Endothelial cell of umbilical vein (primary cell): ENCODE measurements at regions of chr14 and their contacts with region 1.

Region 1: DNA sequence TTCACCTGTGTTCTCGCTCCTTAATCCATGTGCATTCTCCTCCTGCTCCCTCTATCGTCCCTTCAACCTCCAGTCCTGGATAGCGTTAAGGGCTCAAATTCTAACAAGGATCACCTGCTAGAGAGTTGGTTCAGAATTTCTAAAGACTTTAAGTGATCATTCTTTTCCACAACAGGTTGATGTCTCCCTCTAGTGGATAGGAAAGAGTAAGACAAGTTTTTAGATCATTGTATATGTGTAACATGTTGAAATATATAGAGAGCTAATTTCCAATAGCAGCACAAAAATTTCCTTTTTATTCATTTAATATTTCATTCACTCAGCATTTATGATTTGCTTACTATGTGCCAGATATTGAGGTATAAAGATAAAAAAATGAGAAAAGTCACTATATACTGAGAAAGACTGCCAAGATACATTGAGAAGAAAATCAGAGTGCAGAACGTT is 9.3 kb upstream of the ESR2 start:
- DNase-seq: peak; percentile 71
- H3K4me3 ChIP-seq: no peak overlapping the region
- H3K27ac ChIP-seq: no peak overlapping the region
- H3K4me1 ChIP-seq: no peaks in the 10 kb centered on the region
- H3K27me3 ChIP-seq: no peaks in the 10 kb centered on the region
- CTCF ChIP-seq: peak; percentile 48 to 50
- POLR2A ChIP-seq: no peak

Region 2: DNA sequence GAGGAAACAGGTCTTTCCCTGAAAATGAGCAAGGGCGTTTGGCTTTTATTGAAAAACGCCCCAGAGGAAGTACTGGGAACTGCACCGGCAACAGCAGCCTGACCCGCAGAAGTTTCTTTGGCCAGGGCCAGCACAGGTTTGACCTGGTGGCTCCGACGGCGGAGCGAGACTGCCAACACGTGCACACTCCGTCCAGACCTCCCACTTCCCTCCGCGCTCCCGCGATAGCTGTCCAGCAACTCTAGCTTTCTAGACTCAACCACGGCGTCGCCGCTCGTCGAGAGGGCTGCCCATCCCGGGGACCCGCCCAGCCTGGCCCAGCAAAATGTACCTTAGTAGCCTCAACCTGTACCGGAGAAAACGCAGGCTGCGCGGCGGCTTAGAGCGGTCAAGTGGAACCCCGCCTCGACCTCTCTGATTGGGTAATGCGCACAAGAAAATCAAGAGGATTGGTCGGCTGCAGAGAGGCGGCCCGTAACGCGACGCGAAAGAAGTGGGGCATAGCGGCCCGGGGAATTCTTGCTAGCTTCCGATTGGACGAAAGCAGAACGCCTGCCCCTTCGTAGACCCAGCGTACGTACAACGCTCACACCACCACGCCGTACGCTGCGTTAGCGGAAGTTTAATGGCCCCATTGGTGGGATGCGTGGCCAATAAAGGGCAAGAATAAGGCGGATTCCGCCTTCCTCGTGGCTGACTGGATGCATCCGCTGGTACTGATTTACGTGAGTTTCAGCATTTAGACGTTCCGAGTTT is 661.8 kb before region 1 on chr14 and contains the start of gene WDR89:
- CTCF ChIA-PET with region 1: interaction called, 6 read pairs
- POLR2A ChIA-PET with region 1: no interaction called
- dilution Hi-C with region 1: no loop called
- intact Hi-C with region 1: loop called (anchors 5 kb)
- DNase-seq: peak; percentile 100
- H3K4me3 ChIP-seq: peak within 1 kb of the TSS; percentile 90 to 95 (median 93)
- H3K27ac ChIP-seq: peak within 1 kb of the TSS; percentile 80
- H3K4me1 ChIP-seq: peaks cover 4% of the 10 kb centered on the region
- H3K27me3 ChIP-seq: no peaks in the 10 kb centered on the region
- CTCF ChIP-seq: peak; percentile 79
- POLR2A ChIP-seq: peak; percentile 81
- total RNA-seq, gene WDR89: 10.7 and 12.0 TPM in 2 replicates

Region 3: DNA sequence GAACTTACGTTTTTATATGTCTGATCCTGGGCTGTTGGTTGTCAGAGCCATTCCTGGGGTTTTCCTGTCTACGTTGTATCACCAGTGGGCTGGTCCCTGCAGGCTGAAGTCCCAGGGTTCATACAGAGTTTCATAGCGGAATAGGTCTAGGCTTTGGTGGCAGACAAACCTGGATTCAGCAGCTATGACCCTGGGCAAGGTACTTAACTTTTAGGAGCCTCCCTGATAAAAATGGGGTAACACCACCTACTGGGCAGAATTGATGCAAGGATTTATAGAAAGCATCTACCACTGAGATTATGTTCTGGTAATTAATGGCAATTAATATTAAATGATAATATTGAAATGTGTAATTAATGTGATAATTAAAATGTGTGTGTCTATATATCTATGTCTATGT is 309.5 kb before region 1 on chr14:
- CTCF ChIA-PET with region 1: interaction called, 23 read pairs
- POLR2A ChIA-PET with region 1: no interaction called
- dilution Hi-C with region 1: no loop called
- intact Hi-C with region 1: no loop called
- DNase-seq: peak; percentile 16
- H3K4me3 ChIP-seq: no peak overlapping the region
- H3K27ac ChIP-seq: no peak overlapping the region
- H3K4me1 ChIP-seq: peaks cover 5% of the 10 kb centered on the region
- H3K27me3 ChIP-seq: no peaks in the 10 kb centered on the region
- CTCF ChIP-seq: no peak
- POLR2A ChIP-seq: no peak

Region 4: GRCh38 chr14:64026600-64026999 is 276.9 kb before region 1 on chr14:
- CTCF ChIA-PET with region 1: interaction called, 24 read pairs
- POLR2A ChIA-PET with region 1: no interaction called
- dilution Hi-C with region 1: no loop called
- intact Hi-C with region 1: no loop called
- DNase-seq: no peak
- H3K4me3 ChIP-seq: no peak overlapping the region
- H3K27ac ChIP-seq: no peak overlapping the region
- H3K4me1 ChIP-seq: no peaks in the 10 kb centered on the region
- H3K27me3 ChIP-seq: no peaks in the 10 kb centered on the region
- CTCF ChIP-seq: no peak
- POLR2A ChIP-seq: no peak

Region 5: GRCh38 chr14:64119500-64119899 is 184.0 kb before region 1 on chr14:
- CTCF ChIA-PET with region 1: interaction called, 10 read pairs
- POLR2A ChIA-PET with region 1: no interaction called
- dilution Hi-C with region 1: no loop called
- intact Hi-C with region 1: no loop called
- DNase-seq: no peak
- H3K4me3 ChIP-seq: no peak overlapping the region
- H3K27ac ChIP-seq: no peak overlapping the region
- H3K4me1 ChIP-seq: peaks cover 4% of the 10 kb centered on the region
- H3K27me3 ChIP-seq: no peaks in the 10 kb centered on the region
- CTCF ChIP-seq: no peak
- POLR2A ChIP-seq: no peak

Region 6: GRCh38 chr14:64279704-64280668 is 23.5 kb before region 1 on chr14:
- CTCF ChIA-PET with region 1: interaction called, 10 read pairs
- POLR2A ChIA-PET with region 1: no interaction called
- dilution Hi-C with region 1: no loop called
- intact Hi-C with region 1: no loop called
- DNase-seq: peak; percentile 92
- H3K4me3 ChIP-seq: no peak overlapping the region
- H3K27ac ChIP-seq: no peak overlapping the region
- H3K4me1 ChIP-seq: peaks cover 22% of the 10 kb centered on the region
- H3K27me3 ChIP-seq: no peaks in the 10 kb centered on the region
- CTCF ChIP-seq: no peak
- POLR2A ChIP-seq: peak; percentile 55

Region 7: DNA sequence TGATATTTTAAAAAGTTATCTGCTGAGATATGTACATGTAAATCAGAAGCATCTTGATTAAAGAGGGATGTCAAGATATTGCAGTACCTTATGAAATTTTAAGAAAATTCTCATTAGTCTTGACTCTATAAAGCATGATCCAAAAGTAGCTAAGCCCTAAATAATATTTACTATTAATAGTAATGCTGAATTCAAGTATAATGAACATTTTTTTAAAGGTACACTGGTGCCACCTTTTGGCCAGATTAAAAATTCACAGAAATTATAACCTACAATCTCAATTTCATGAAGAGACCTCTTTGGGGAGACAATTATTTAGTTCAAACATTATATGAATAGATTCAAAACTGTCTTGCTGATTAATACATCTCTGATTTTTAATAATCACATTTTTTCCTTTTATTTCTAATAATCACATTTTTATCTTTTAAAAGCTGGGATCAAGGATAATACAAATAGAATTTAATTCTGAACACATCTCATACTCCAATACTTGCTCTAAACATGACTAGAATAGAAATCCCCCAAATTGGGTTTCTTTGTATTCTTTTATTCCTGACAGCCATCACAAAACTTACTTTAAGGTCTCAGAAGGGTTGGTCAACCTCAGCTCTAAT is 175.2 kb after region 1 on chr14:
- CTCF ChIA-PET with region 1: interaction called, 25 read pairs
- POLR2A ChIA-PET with region 1: no interaction called
- dilution Hi-C with region 1: no loop called
- intact Hi-C with region 1: no loop called
- DNase-seq: peak; percentile 60
- H3K4me3 ChIP-seq: no peak overlapping the region
- H3K27ac ChIP-seq: no peak overlapping the region
- H3K4me1 ChIP-seq: no peaks in the 10 kb centered on the region
- H3K27me3 ChIP-seq: no peaks in the 10 kb centered on the region
- CTCF ChIP-seq: peak; percentile 9 to 23
- POLR2A ChIP-seq: no peak